PC-3 (cell line): ENCODE measurements at regions of chr10 and their contacts with region 1.

Region 1: DNA sequence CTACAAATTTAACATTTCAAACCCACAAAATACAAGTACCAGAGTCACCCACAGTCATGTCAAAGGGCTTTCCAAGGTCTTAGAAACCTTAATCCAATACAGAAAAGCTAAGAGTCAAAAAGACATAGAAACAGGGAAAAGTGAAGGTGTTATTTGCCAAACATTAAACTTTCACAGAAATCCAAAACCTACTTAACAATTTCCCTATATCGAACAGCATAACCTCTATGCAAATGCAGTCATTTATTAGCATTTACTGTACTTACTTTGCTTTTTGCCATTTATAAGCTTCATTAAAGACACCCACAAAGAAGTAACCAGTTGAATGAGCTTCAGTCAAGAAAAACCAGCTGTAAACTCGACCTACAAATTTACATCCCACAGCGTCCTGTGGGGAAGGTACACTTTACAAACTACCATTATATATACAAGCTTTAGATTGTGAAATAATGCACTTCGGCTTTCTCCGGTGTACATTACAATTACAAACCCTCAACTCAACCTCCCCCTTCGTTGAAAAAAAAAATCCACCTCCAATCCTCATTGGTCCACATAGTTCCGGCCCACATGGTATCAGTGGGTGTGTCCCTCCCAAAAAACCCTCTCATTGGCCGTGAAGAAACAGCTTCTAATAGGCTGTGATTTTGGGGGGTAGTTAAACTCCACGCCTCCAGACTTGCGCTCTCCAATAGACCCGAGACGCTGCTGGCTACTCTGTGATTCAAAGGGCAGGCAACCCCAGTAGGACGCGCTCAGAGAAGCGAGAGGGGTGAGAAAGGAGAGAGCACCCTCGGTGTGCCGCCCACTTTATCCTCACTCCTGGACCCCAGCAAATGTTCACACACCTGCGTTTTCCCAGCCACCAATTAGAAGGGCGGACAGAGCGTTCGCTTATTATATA is 1.4 kb downstream of the PANK1 start:
- DNase-seq: peak; percentile 94
- ATAC-seq: peak; percentile 77
- H3K4me3 ChIP-seq: peak overlapping the region; percentile 70
- H3K27ac ChIP-seq: peak overlapping the region; percentile 15; the same call in 1 of the 2 replicates
- H3K4me1 ChIP-seq: peaks cover 21% of the 10 kb centered on the region
- H3K27me3 ChIP-seq: no peaks in the 10 kb centered on the region
- CTCF ChIP-seq: no peak

Region 2: DNA sequence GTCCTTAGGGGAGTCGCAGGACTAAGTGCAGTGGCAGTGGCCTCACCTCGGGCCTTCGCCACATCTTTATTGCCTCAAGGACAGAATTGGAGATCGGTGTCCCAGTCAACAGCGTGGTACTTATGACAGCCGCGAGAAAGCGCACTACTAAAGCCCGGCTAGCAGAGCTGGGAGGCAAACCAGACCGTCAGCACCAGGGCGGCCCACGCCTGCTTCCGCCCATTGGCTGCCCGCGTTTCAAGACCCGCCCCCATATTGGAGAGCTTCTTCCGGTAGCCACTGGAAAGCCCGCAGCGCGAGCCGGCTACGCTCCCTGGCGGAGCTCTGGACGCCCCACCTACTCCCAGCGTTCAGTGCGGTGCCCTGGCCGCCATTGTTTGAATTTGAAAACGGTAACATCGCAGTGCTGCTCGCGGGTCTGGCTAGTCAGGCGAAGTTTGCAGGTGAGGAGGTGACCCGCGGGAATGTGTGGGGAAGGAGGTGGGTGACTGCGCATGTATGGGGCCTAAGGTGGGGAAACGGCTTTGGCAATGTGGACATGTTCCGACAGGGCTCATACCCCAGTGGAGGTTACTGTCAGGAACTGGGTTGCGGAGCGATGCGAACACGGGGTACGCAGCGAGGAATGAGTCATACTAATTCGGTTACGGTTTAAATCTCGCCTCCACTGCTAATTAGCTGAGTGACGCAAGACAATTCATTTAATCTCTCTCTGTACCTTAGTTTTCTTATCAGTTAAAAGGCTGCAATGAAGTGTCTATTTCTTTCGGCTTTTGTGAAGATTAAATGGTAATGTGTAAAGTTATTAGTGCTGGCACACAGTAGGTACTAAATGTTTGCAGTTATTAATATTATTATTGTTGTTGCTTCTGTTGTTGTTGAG is 57.8 kb after region 1 on chr10 and contains the start of gene KIF20B:
- CTCF ChIA-PET with region 1: no interaction called
- POLR2A ChIA-PET with region 1: no interaction called
- intact Hi-C with region 1: loop called (anchors 1 kb)
- DNase-seq: peak; percentile 94
- ATAC-seq: peak; percentile 98
- H3K4me3 ChIP-seq: peak within 1 kb of the TSS; percentile 82
- H3K27ac ChIP-seq: peak within 1 kb of the TSS; percentile 38
- H3K4me1 ChIP-seq: peaks cover 19% of the 10 kb centered on the region
- H3K27me3 ChIP-seq: no peaks in the 10 kb centered on the region
- CTCF ChIP-seq: 0 out of 2 replicates have a peak, but pooled peaks have one; percentile 20
- total RNA-seq, gene KIF20B: 10.8 and 12.6 TPM in 2 replicates